Endothelial cell of umbilical vein (primary cell): ENCODE measurements at regions of chr4 and their contacts with region 1.

Region 1: GRCh38 chr4:38179690-38180377 is 219.6 kb downstream of the PTTG2 start:
- DNase-seq: peak; percentile 77
- H3K4me3 ChIP-seq: no peak overlapping the region
- H3K27ac ChIP-seq: no peak overlapping the region
- H3K4me1 ChIP-seq: peaks cover 10% of the 10 kb centered on the region
- H3K27me3 ChIP-seq: no peaks in the 10 kb centered on the region
- CTCF ChIP-seq: peak; percentile 75 to 85
- POLR2A ChIP-seq: no peak

Region 2: GRCh38 chr4:38160487-38161207 is 19.2 kb before region 1 on chr4:
- CTCF ChIA-PET with region 1: interaction called, 38 read pairs
- POLR2A ChIA-PET with region 1: no interaction called
- dilution Hi-C with region 1: no loop called
- intact Hi-C with region 1: no loop called
- DNase-seq: peak; percentile 91
- H3K4me3 ChIP-seq: no peak overlapping the region
- H3K27ac ChIP-seq: peak overlapping the region; percentile 95
- H3K4me1 ChIP-seq: peaks cover 33% of the 10 kb centered on the region
- H3K27me3 ChIP-seq: peaks cover 0 to under 1% of the 10 kb centered on the region in 2 experiments
- CTCF ChIP-seq: no peak
- POLR2A ChIP-seq: no peak

Region 3: DNA sequence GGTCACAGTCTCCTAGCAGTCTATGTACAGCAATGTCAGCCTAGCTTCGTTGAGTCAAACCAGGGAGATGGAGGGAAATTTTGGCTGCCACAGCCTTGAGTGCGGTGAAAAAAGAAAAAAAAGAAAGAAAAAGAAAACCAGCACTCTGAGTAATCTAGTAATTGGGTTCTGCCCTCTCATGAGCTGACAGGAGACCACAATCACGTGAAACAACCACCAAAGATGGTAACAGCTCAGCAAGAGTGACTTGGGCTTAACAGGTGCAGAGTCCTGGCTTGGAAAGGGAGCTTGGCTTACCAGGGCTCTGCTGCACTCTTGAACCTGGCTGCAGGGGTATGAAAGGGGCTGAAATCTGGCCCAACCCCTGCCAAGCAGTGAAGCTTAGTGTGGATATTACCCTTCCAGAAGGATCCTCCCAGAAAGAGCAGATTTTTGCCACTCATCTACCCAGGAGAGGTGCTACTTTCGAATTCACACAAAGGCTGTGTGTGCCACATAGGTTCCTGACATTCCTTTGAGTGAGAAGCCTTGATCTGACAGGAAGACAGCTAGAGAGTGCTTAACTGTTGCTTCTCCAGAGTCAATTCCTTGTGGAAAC is 130.7 kb after region 1 on chr4:
- CTCF ChIA-PET with region 1: interaction called, 10 read pairs
- POLR2A ChIA-PET with region 1: interaction called, 4 read pairs
- dilution Hi-C with region 1: no loop called
- intact Hi-C with region 1: no loop called
- DNase-seq: no peak
- H3K4me3 ChIP-seq: no peak overlapping the region
- H3K27ac ChIP-seq: no peak overlapping the region
- H3K4me1 ChIP-seq: peaks cover 2% of the 10 kb centered on the region
- H3K27me3 ChIP-seq: no peaks in the 10 kb centered on the region
- CTCF ChIP-seq: no peak
- POLR2A ChIP-seq: no peak

Region 4: GRCh38 chr4:38675146-38676121 is 495.6 kb after region 1 on chr4:
- CTCF ChIA-PET with region 1: interaction called, 133 read pairs
- POLR2A ChIA-PET with region 1: no interaction called
- dilution Hi-C with region 1: no loop called
- intact Hi-C with region 1: loop called (anchors 1 kb)
- DNase-seq: peak; percentile 86
- H3K4me3 ChIP-seq: no peak overlapping the region
- H3K27ac ChIP-seq: no peak overlapping the region
- H3K4me1 ChIP-seq: peaks cover 64% of the 10 kb centered on the region
- H3K27me3 ChIP-seq: no peaks in the 10 kb centered on the region
- CTCF ChIP-seq: peak; percentile 75 to 88
- POLR2A ChIP-seq: no peak

Region 5: DNA sequence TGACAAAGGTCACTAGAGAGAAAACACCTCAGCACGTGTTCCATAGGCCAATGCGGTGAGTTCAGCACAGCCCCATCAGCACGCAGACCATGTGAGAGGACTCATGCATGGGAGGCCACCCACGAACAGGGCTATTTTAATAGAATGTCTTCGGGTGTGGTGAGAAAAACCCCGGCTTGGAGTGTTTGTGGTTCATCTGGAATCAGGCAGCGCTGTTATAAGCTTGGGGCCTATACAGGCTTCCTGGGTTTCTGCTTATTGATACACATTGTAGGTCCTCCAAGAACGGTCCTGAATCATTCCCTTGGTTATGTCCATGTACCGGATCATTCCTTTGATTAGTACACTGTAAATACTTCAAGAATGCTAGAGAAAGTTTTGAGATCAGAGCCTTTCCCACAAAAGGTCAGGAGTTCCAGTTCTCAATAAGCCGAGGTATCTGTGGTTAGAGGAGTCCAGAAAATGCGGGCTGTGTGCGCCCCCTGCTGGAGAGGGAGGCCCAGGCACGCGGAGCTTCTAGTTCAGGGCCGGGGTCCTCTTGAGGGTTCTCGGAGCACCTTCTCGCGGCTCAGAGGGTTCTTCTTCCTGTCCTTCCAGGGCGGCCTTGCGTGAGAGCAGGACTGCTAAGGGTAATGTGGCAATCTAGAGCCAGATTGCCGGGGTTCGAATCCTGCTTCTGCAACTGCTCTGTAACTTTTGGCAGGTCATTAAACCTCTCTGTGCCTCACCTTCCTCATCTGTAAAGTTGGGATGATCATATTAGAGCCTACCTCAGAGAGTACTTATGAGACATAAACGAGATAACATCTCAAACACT is 551.2 kb after region 1 on chr4:
- CTCF ChIA-PET with region 1: interaction called, 104 read pairs
- POLR2A ChIA-PET with region 1: no interaction called
- dilution Hi-C with region 1: no loop called
- intact Hi-C with region 1: loop called (anchors 1 kb)
- DNase-seq: peak; percentile 73
- H3K4me3 ChIP-seq: no peak overlapping the region
- H3K27ac ChIP-seq: no peak overlapping the region
- H3K4me1 ChIP-seq: no peaks in the 10 kb centered on the region
- H3K27me3 ChIP-seq: peaks cover 0 to 4% of the 10 kb centered on the region in 2 experiments
- CTCF ChIP-seq: peak; percentile 93 to 96
- POLR2A ChIP-seq: no peak

Region 6: DNA sequence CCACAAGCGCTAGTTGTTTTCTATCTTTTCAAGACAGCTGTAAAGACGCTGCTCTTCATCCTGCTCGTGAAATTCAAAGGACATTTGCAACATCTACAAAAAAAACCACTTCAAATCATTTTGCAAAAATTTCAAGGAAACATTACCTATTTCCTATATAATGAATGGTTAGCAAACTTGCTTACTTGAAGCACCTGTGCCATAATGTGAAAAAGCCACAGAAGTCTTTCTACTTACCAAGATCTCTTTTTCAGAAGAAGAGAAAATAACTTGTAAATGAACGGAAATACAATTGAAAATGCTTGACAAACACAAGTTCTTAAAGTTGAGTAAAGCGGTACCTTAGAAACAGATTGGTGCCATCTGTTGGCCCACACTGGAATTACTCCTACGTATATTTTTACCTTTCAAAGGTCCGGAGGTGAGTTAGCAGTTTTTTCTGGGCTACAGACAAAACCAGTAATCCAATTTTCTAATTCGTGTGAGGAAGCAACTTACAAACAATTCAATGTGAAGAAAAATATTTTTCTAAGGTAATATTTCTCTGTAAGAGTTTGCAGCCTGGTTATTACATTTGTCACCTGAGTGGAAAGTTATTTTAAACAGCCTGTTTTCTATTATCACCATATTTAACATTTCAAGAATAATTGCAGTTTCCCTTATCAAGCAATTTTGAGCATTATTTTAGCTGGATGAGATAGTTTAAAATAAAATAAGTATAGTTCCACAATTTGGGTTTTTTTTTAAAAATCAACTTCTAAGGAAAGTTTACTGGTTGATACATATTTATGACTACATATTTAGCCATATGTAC is 676.9 kb after region 1 on chr4 and contains the start of gene TLR6:
- CTCF ChIA-PET with region 1: interaction called, 7 read pairs
- POLR2A ChIA-PET with region 1: no interaction called
- dilution Hi-C with region 1: no loop called
- intact Hi-C with region 1: loop called (anchors 5 kb)
- DNase-seq: peak; percentile 73
- H3K4me3 ChIP-seq: peak within 1 kb of the TSS in 1 of 3 experiments; percentile 34
- H3K27ac ChIP-seq: peak within 1 kb of the TSS; percentile 72
- H3K4me1 ChIP-seq: peaks cover 24% of the 10 kb centered on the region
- H3K27me3 ChIP-seq: peaks cover 0 to 2% of the 10 kb centered on the region in 2 experiments
- CTCF ChIP-seq: peak; percentile 51 to 60
- POLR2A ChIP-seq: no peak
- total RNA-seq, gene TLR6: 1.1 and 1.7 TPM in 2 replicates